ENCODE measurements at regions of chr1 and their contacts with region 1.

Region 1: GRCh38 chr1:184574588-184574987 is 180.1 kb downstream of the EDEM3 start:
- DNase-seq: no peak
- ATAC-seq: no peak
- H3K4me3 ChIP-seq: no peak overlapping the region
- H3K27ac ChIP-seq: no peak overlapping the region
- H3K4me1 ChIP-seq: no peaks in the 10 kb centered on the region
- H3K27me3 ChIP-seq: no peaks in the 10 kb centered on the region
- CTCF ChIP-seq: no peak
- POLR2A ChIP-seq: no peak
- RAD21 ChIP-seq: no peak

Region 2: DNA sequence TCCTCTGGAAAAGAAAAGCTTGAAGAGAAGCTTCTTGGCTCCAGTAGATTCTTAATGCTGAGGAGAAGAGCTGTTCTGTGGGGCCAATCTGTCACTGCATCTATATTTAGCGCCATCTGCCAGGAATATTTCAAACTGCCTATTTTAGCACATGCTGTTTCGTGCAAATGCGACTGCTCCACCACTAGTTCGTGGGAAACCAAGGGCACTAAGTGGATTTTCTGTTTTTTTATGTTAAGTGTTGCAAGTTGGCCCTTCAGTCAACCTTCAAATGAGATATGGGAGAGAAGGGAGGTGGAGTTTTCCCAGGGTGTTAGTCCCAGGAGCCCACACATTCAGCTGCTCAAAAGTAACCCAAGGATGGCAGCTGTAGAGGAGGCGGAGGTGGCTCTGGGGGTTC is 431.1 kb before region 1 on chr1:
- CTCF ChIA-PET with region 1: no interaction called
- POLR2A ChIA-PET with region 1: no interaction called
- RAD21 ChIA-PET with region 1: no interaction called
- intact Hi-C with region 1: no loop called
- DNase-seq: no peak
- ATAC-seq: peak; percentile 50; the same call in 1 of the 2 replicates
- H3K4me3 ChIP-seq: no peak overlapping the region
- H3K27ac ChIP-seq: no peak overlapping the region
- H3K4me1 ChIP-seq: no peaks in the 10 kb centered on the region
- H3K27me3 ChIP-seq: no peaks in the 10 kb centered on the region
- CTCF ChIP-seq: 0 out of 6 replicates have a peak, but pooled peaks of 1 of the 3 experiments have one; percentile 19
- POLR2A ChIP-seq: no peak
- RAD21 ChIP-seq: 0 out of 2 replicates have a peak, but pooled peaks have one; percentile 21

Region 3: GRCh38 chr1:184513966-184514365 is 60.6 kb before region 1 on chr1:
- CTCF ChIA-PET with region 1: no interaction called
- POLR2A ChIA-PET with region 1: no interaction called
- RAD21 ChIA-PET with region 1: no interaction called
- intact Hi-C with region 1: loop called (anchors 10 kb)
- DNase-seq: no peak
- ATAC-seq: no peak
- H3K4me3 ChIP-seq: no peak overlapping the region
- H3K27ac ChIP-seq: no peak overlapping the region
- H3K4me1 ChIP-seq: peaks cover 0 to 12% of the 10 kb centered on the region in 2 experiments; a peak in 2 of 4 replicates
- H3K27me3 ChIP-seq: no peaks in the 10 kb centered on the region
- CTCF ChIP-seq: no peak
- POLR2A ChIP-seq: no peak
- RAD21 ChIP-seq: no peak

Measured in HCT116 (cell line).